Activated CD4-positive, alpha-beta memory T cell treated with anti-CD3 and anti-CD28 coated beads for 36 hours (primary cell): ENCODE measurements at regions of chr2 and their contacts with region 1.

Region 1: GRCh38 chr2:171086352-171087290 is 74.1 kb downstream of the TLK1 start:
- DNase-seq: peak; percentile 66
- H3K4me3 Mint-ChIP-seq: peak overlapping the region; percentile 64
- H3K27ac Mint-ChIP-seq: peak overlapping the region; percentile 43
- H3K4me1 Mint-ChIP-seq: peaks cover 58% of the 10 kb centered on the region
- H3K27me3 Mint-ChIP-seq: no peaks in the 10 kb centered on the region

Region 2: DNA sequence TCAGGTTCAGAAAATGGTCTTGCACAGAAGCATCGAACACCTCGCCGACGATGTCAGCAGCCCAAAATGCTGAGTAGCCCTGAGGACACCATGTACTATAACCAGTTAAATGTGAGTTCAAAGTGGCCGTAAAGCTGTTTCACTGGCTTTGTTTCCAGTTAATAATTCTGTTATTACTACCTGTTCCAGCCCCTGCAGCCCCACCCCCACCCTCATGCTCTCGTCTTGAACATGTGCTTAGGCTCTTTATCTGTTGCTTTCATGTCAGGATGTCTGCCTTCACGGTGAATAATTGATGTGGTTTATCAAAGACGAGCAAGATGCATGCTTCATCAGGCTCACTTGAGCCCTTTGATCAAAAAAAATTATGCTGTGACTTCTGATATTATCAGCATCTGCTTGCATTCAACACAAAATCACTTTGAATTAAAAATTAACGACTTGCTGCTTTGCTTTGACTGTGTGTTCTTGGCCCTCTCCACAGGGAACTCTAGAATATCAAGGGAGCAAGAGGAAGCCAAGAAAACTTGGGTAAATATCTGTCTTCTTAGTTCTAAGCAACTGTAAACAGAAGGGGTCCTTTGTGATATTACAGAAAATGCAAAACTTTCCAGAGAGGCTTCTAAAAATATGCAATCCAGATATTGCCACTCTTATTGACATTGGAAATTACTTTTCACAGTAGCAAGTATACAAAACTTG is 434.8 kb before region 1 on chr2:
- CTCF ChIA-PET with region 1: no interaction called
- POLR2A ChIA-PET with region 1: no interaction called
- intact Hi-C with region 1: no loop called
- DNase-seq: peak; percentile 14
- H3K4me3 Mint-ChIP-seq: no peak overlapping the region
- H3K27ac Mint-ChIP-seq: no peak overlapping the region
- H3K4me1 Mint-ChIP-seq: peaks cover 13% of the 10 kb centered on the region
- H3K27me3 Mint-ChIP-seq: peaks cover 1% of the 10 kb centered on the region

Region 3: DNA sequence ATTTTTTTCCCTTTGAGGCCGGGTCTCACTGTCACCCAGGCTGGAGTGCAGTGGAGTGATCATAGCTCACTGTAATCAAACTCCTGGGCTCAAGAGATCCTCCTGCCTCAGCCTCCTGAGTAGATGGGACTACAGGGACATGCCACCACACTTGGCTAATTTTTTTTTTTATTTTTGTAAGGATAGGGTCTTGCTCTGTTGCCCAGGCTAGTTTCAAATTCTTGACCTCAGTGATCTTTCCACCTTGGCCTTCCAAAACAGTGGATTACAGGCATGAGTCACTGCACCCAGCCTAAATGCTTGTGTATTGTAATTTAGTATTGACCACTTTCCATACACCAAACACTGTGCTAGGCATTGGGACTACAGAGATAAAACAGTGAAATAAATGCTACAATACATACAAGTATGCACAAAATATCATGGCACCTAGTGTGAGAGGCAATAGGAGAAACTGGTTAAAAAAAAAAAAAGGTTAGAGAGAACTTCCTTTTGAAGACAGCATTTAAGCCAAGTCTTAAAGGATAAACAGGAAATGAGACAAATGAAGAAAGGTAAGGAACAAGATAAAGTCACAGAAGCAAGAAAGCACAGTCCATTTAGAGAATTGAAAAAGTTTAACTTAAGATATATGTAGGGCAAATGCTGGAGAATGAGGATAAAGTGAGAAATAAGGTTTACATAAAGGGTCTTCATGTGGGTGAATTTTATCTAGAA is 44.2 kb before region 1 on chr2:
- CTCF ChIA-PET with region 1: interaction called, 6 read pairs
- POLR2A ChIA-PET with region 1: no interaction called
- intact Hi-C with region 1: loop called (anchors 2 kb)
- DNase-seq: no peak
- H3K4me3 Mint-ChIP-seq: no peak overlapping the region
- H3K27ac Mint-ChIP-seq: peak overlapping the region; percentile 76
- H3K4me1 Mint-ChIP-seq: peaks cover 30% of the 10 kb centered on the region
- H3K27me3 Mint-ChIP-seq: no peaks in the 10 kb centered on the region